ENCODE measurements at regions of chr15 and their contacts with region 1.

Region 1: DNA sequence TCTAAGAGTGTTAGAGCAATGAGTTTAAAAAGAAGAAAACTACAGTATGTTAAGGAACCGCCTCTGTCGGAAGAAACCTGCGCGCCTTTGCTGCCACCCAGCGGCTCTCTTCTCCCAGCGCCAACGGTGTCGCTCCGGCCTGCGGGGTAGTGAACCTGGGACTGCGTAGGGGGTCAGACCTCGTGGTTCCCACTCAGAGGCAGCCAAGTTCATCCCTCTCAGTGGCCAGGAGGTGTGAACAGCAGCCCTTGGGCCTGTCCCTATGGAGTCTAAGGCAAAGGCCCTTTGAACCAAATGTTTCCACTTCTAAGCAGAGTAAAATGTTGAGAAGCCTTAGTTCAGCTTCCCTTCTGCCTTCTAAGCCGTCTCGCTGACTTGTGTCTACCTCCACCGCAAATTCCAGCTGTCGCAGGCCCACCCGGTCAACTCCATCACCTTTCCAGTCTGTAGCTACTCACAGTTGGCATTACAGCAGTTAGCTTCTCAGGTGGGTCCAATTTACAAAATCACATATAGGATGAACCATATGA is 980 bp upstream of the RAB27A start:
- DNase-seq: peak; percentile 88
- H3K4me3 Mint-ChIP-seq: peak overlapping the region; percentile 91
- H3K27ac Mint-ChIP-seq: peak overlapping the region; percentile 91
- H3K4me1 Mint-ChIP-seq: peaks cover 32% of the 10 kb centered on the region
- H3K27me3 Mint-ChIP-seq: peaks cover 4% of the 10 kb centered on the region

Region 2: GRCh38 chr15:55221090-55222011 is 69.2 kb before region 1 on chr15:
- CTCF ChIA-PET with region 1: interaction called, 30 read pairs
- DNase-seq: no peak
- H3K4me3 Mint-ChIP-seq: no peak overlapping the region
- H3K27ac Mint-ChIP-seq: peak overlapping the region; percentile 76
- H3K4me1 Mint-ChIP-seq: peaks cover 85% of the 10 kb centered on the region
- H3K27me3 Mint-ChIP-seq: no peaks in the 10 kb centered on the region

Measured in activated naive CD4-positive, alpha-beta T cell treated with anti-CD3 and anti-CD28 coated beads, Interleukin-2, amount 10 ng/mL, durations not matched to agents 7 days and 5 days (primary cell).